ENCODE measurements at regions of chr4 and their contacts with region 1.

Region 1: DNA sequence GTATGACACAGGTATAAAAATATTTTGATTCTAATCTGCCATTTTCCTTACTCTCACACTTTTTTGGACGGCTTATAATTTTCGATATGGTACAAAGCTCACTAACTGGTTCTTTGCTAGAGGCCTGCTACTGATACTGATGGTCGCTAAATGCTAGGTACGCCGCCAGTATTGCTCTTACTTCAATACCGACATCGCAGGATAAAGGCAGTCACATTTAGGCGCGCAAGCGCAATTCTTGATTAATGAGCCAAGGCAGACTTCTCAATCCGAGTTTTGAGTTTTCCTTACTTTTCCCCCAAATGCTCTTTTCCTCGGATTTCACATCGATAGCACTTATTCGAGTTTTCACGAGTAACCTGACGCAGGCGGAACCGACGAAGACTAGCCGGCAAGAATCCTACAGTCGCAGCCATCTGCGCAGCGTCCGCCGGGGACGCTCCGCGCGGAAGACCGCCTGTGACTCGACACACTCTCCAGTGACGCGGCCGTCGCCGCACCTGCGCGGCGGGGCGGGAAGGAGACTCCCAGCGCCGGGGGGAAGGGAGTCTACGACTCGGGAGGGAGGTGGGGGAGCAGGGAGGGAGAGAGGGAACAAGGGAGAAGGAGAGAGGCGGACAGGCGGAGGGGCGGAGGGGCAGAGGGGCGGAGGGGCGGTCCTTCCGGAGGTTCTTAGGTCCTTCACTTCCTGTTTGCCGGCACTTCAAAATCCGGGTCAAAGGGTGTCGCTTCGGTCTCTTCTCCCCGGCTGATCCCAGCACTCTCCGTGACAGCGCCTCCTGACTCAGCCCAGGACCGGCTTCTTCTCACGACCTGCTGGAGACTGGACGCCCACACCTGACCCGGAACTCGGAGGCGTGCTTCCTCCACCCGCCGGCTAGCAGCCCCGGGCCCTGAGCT is at the start of gene USP38:
- DNase-seq: peak; percentile 81
- H3K4me3 Mint-ChIP-seq: peak within 1 kb of the TSS; percentile 89
- H3K27ac Mint-ChIP-seq: peak within 1 kb of the TSS; percentile 96
- H3K4me1 Mint-ChIP-seq: peaks cover 31% of the 10 kb centered on the region
- H3K27me3 Mint-ChIP-seq: no peaks in the 10 kb centered on the region
- total RNA-seq, gene USP38: 23.5 and 26.2 TPM in 2 replicates

Region 2: DNA sequence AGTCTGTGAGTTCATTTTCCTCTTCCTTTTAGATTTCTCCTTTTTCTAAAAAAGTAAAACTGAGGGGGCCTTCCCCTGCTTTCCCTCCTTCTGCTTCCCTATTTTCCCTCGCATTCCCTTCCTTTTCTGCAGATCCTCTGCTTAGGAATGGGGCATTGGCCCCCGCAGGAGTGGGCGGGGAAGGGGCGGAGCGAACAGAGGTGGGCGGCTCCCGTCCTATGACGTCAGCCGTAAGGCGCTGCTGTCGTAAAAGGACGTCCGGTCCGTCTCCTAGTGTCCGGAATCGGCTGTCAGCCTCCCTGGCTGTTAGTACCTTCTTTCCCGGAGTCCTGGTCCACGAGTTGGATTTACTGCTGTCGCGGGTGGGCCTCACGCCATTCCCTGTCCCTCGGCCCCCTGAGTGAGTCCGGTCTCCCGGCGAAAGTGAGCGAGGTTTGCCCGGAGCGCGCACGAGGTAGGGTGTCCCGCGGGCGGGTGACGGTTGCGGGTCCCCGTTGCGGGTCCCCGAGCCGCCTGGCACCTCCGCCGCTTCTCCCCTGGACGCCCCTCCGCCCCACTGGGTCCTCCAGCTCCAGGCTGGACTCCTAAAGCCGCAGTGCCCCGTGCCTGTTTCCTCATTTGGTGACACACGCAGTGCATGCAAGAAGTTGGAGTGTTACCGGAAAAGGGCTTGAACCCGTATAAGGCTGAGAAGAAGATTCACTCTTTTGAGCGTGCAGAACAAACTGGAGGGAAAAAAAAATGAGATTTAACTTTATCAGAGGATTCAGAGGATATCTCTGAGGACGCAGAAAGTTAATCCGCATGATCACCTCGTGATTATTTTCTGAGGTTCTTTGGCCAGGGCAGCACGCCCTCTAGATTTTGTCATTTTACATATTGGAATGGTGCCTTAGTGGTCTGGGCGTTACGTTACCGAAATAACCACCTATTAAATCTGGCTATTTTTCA is 1963.5 kb before region 1 on chr4 and contains the start of gene ZNF330:
- intact Hi-C with region 1: loop called (anchors 2 kb)
- DNase-seq: peak; percentile 82
- H3K4me3 Mint-ChIP-seq: peak within 1 kb of the TSS; percentile 91
- H3K27ac Mint-ChIP-seq: peak within 1 kb of the TSS; percentile 95
- H3K4me1 Mint-ChIP-seq: peaks cover 29% of the 10 kb centered on the region
- H3K27me3 Mint-ChIP-seq: peaks cover 9% of the 10 kb centered on the region
- total RNA-seq, gene ZNF330: 55.3 and 57.9 TPM in 2 replicates

Region 3: GRCh38 chr4:143335979-143336780 is 151.7 kb after region 1 on chr4:
- intact Hi-C with region 1: loop called (anchors 2 kb)
- DNase-seq: peak; percentile 23
- H3K4me3 Mint-ChIP-seq: peak overlapping the region; percentile 88
- H3K27ac Mint-ChIP-seq: no peak overlapping the region
- H3K4me1 Mint-ChIP-seq: peaks cover 6% of the 10 kb centered on the region
- H3K27me3 Mint-ChIP-seq: peaks cover 43% of the 10 kb centered on the region

Region 4: GRCh38 chr4:143358923-143359643 is 174.6 kb after region 1 on chr4:
- intact Hi-C with region 1: loop called (anchors 1 kb)
- DNase-seq: peak; percentile 13
- H3K4me3 Mint-ChIP-seq: peak overlapping the region; percentile 58
- H3K27ac Mint-ChIP-seq: peak overlapping the region; percentile 89
- H3K4me1 Mint-ChIP-seq: peaks cover 27% of the 10 kb centered on the region
- H3K27me3 Mint-ChIP-seq: peaks cover 13% of the 10 kb centered on the region